Dorsolateral prefrontal cortex (tissue), 120 donors: ENCODE measurements at regions of chr5 and their contacts with region 1.

Region 1: DNA sequence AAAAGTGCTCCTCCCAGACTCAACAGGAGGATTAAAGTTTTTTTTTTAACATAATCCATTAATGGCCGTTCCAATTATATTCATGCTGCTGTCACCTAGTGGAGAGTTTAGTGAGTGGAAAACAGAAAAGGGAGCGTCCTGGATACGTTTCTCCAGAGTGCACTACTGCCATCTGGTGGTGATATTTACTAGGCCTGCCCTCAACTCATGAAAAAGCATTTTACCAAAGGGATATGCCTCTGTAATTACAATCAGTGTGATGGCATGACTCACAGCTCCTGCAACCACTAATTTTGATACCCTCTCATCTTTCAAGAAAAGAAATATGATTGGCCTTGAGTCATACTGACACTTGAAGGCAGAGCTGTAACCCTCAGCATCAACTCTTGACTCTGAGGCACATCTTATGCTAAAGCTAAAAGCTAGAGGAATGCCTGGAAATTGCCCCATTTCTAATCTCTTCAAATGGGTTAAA is 20.0 kb downstream of the MINAR2 start:
- DNase-seq: peak in 8 of 10 donors; percentile 39 to 84 (median 58)
- H3K4me3 ChIP-seq: no peak overlapping the region
- H3K27ac ChIP-seq: no peak overlapping the region
- H3K27me3 ChIP-seq: no peaks in the 10 kb centered on the region
- CTCF ChIP-seq: peak; percentile 98 to 100 (median 100)

Region 2: GRCh38 chr5:128905571-128906110 is 862.3 kb before region 1 on chr5:
- intact Hi-C with region 1: loop called (anchors 5 kb)
- DNase-seq: peak in 1 of 10 donors; percentile 19
- H3K4me3 ChIP-seq: no peak overlapping the region
- H3K27ac ChIP-seq: no peak overlapping the region
- H3K27me3 ChIP-seq: peaks cover 0 to 9% (median 0%) of the 10 kb centered on the region in 45 donors
- CTCF ChIP-seq: peak; percentile 65 to 96 (median 83)

Region 3: DNA sequence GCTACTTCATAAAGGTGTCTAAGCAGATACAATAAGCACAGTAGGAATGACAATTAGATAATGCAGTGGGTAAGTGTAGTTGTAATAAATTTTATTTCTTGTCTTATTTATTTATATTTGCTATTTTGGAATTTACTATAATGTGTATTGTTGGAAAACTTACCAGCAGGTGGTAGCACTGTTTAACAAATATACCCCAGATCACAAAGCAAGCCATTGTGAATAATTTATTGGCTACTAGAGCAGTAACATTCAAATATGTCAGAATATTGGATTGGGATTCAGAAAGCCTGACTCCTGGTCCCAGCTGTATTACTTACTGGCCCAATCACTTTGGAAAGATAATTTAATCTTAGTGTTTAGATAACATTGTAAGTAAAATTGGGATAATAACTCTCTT is 595.4 kb before region 1 on chr5:
- intact Hi-C with region 1: loop called (anchors 1 to 5 kb)
- DNase-seq: no peak
- H3K4me3 ChIP-seq: no peak overlapping the region
- H3K27ac ChIP-seq: peak overlapping the region in 2 of 59 donors; percentile 21 to 30
- H3K27me3 ChIP-seq: no peaks in the 10 kb centered on the region
- CTCF ChIP-seq: peak; percentile 30 to 89 (median 64)

Region 4: GRCh38 chr5:129460936-129461711 is 306.8 kb before region 1 on chr5:
- intact Hi-C with region 1: loop called in 1 of 2 experiments (anchors 10 kb)
- DNase-seq: peak in 8 of 10 donors; percentile 3 to 78 (median 45)
- H3K4me3 ChIP-seq: peak overlapping the region; percentile 46 to 81 (median 67)
- H3K27ac ChIP-seq: peak overlapping the region in 33 of 59 donors; percentile 6 to 87 (median 53)
- H3K27me3 ChIP-seq: peaks cover 0 to 10% (median 0%) of the 10 kb centered on the region in 45 donors
- CTCF ChIP-seq: peak in 45 of 56 donors; percentile 6 to 63 (median 43)

Region 5: GRCh38 chr5:131109540-131110255 is 1341.8 kb after region 1 on chr5:
- intact Hi-C with region 1: loop called in 1 of 2 experiments (anchors 5 kb)
- DNase-seq: peak in 1 of 10 donors; percentile 26
- H3K4me3 ChIP-seq: no peak overlapping the region
- H3K27ac ChIP-seq: peak overlapping the region in 46 of 59 donors; percentile 4 to 77 (median 52)
- H3K27me3 ChIP-seq: no peaks in the 10 kb centered on the region
- CTCF ChIP-seq: peak; percentile 68 to 97 (median 85)